Ascending aorta (tissue), 2 donors: ENCODE measurements at regions of chr6 and their contacts with region 1.

Region 1: DNA sequence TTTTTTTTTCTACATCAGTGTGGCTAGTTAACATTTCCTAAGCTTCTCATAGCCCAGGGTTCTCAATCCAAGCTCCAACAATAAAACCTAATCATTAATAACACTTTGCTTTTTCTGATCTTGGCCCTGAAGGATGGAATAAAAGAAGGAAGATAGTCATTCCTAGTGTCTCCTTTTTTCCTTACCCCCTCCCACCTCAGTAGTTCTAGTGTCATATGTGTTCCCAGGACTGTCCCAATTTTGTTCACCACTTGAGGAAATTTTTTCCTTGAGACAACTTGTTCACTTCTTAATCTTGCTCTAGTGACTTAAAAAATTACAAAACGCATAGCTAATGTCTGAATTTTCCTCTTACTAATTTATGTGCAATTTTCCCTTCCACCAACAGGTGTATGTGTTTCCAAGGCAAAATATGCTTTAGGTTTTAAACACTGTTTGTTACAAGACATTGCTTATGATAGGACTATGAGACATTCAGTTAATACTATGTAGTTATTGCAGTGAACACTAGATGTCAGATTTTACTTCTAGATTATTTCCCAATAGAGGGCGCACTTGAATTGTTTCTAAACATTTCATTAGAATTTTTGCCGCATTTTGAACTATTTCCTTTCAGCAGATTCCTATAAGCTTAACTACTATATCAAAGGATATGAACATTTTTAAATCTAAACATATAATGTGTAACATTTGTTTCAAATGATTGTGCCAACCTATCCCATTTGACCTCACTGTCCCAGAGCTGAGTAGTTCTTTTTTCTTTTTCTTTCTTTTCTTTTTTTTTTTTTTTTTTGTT is 18.5 kb upstream of the C6orf141 start:
- DNase-seq: no peak
- H3K4me3 ChIP-seq: no peak overlapping the region
- H3K27ac ChIP-seq: no peak overlapping the region
- H3K4me1 ChIP-seq: no peaks in the 10 kb centered on the region
- H3K27me3 ChIP-seq: no peaks in the 10 kb centered on the region
- CTCF ChIP-seq: peak; percentile 19 to 63 (median 61)

Region 2: GRCh38 chr6:49570474-49571079 is 38.6 kb after region 1 on chr6:
- intact Hi-C with region 1: no loop called
- DNase-seq: no peak
- H3K4me3 ChIP-seq: no peak overlapping the region
- H3K27ac ChIP-seq: no peak overlapping the region
- H3K4me1 ChIP-seq: no peaks in the 10 kb centered on the region
- H3K27me3 ChIP-seq: no peaks in the 10 kb centered on the region
- CTCF ChIP-seq: no peak

Region 3: GRCh38 chr6:49606696-49607390 is 74.9 kb after region 1 on chr6:
- intact Hi-C with region 1: loop called (anchors 5 kb)
- DNase-seq: no peak
- H3K4me3 ChIP-seq: no peak overlapping the region
- H3K27ac ChIP-seq: no peak overlapping the region
- H3K4me1 ChIP-seq: no peaks in the 10 kb centered on the region
- H3K27me3 ChIP-seq: no peaks in the 10 kb centered on the region
- CTCF ChIP-seq: peak; percentile 15 to 64 (median 54)

Region 4: GRCh38 chr6:49849213-49849907 is 317.4 kb after region 1 on chr6:
- intact Hi-C with region 1: loop called (anchors 5 kb)
- DNase-seq: no peak
- H3K4me3 ChIP-seq: no peak overlapping the region
- H3K27ac ChIP-seq: no peak overlapping the region
- H3K4me1 ChIP-seq: no peaks in the 10 kb centered on the region
- H3K27me3 ChIP-seq: no peaks in the 10 kb centered on the region
- CTCF ChIP-seq: peak; percentile 16 to 57 (median 45)